ENCODE measurements at regions of chr10 and their contacts with region 1.

Region 1: GRCh38 chr10:96642973-96643372 is 56.2 kb upstream of the TM9SF3 start:
- H3K4me3 ChIP-seq: no peak overlapping the region
- H3K27ac ChIP-seq: no peak overlapping the region
- H3K4me1 ChIP-seq: no peaks in the 10 kb centered on the region
- CTCF ChIP-seq: no peak

Region 2: DNA sequence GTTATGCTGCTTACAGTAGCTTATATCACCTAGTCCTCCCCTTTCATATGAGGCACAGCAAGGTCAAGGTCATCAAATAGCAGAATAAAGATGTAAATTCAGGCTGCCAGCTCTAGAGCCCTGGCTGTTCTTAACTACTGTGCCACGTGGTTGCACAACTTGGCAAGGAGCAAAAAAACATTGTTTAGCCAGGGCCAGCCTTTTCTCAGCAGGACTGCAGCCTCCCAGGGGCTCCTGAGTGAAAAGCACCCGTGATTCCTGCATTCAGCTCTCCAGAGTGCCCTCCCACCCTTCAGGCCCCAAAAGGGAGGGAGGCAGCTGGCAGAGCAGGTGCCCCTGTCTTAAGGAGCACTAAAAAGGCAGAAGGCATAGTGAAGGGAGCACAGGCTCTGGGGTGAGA is 24.3 kb before region 1 on chr10:
- CTCF ChIA-PET with region 1: interaction called, 12 read pairs
- POLR2A ChIA-PET with region 1: no interaction called
- H3K4me3 ChIP-seq: no peak overlapping the region
- H3K27ac ChIP-seq: no peak overlapping the region
- H3K4me1 ChIP-seq: no peaks in the 10 kb centered on the region
- CTCF ChIP-seq: no peak

Region 3: GRCh38 chr10:96743988-96744585 is 101.1 kb after region 1 on chr10:
- CTCF ChIA-PET with region 1: interaction called, 12 read pairs
- POLR2A ChIA-PET with region 1: interaction called, 3 read pairs
- H3K4me3 ChIP-seq: no peak overlapping the region
- H3K27ac ChIP-seq: no peak overlapping the region
- H3K4me1 ChIP-seq: no peaks in the 10 kb centered on the region
- CTCF ChIP-seq: no peak

Region 4: GRCh38 chr10:96803318-96803664 is 160.3 kb after region 1 on chr10:
- CTCF ChIA-PET with region 1: no interaction called
- POLR2A ChIA-PET with region 1: no interaction called
- H3K4me3 ChIP-seq: no peak overlapping the region
- H3K27ac ChIP-seq: no peak overlapping the region
- H3K4me1 ChIP-seq: no peaks in the 10 kb centered on the region
- CTCF ChIP-seq: no peak

Region 5: DNA sequence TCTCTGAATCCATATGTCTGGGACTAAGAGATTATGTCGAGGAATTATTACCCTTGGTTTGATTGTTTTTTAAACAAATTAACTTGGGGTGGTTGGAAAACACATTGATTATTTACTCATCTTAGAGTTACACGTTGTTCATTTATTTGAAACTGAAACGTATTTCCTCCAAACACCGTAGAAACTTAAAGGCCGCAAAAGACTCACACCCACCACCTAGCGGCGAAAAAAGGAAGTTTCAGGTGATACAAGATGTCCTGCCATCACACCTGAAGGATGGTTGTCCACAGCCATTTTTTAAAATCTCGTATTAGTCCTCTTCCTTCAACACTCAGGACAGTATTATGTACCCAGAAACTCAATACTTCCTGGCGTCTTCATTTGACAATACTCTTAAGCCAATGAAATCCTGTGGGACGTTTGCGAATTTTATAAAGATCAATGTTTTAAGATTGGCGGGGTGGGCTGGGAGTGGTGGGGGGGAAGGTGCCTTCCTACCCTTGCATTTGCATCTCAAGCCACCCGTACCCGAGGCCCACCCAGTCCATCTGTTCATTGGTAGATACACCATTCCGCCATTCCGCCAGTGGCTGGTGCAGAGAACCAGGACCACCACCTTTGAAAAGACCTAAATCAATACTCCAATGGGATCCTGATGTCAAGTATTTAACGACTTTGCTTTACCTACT is 187.7 kb after region 1 on chr10:
- CTCF ChIA-PET with region 1: interaction called, 11 read pairs
- POLR2A ChIA-PET with region 1: no interaction called
- H3K4me3 ChIP-seq: no peak overlapping the region
- H3K27ac ChIP-seq: no peak overlapping the region
- H3K4me1 ChIP-seq: no peaks in the 10 kb centered on the region; the same call in 1 of the 2 replicates
- CTCF ChIP-seq: no peak